ENCODE measurements at regions of chr21 and their contacts with region 1.

Region 1: GRCh38 chr21:45973659-45974072 is 7.9 kb upstream of the COL6A1 start:
- DNase-seq: peak; percentile 76 to 86 (median 86)
- H3K4me3 ChIP-seq: peak overlapping the region; percentile 29 to 75 (median 55)
- H3K27ac ChIP-seq: no peak overlapping the region
- H3K4me1 ChIP-seq: peaks cover 0 to 45% (median 35%) of the 10 kb centered on the region in 4 experiments
- H3K27me3 ChIP-seq: peaks cover 0 to 67% (median 24%) of the 10 kb centered on the region in 5 experiments

Region 2: GRCh38 chr21:45800339-45801080 is 173.2 kb before region 1 on chr21:
- CTCF ChIA-PET with region 1: no interaction called
- POLR2A ChIA-PET with region 1: no interaction called
- DNase-seq: no peak
- H3K4me3 ChIP-seq: no peak overlapping the region
- H3K27ac ChIP-seq: no peak overlapping the region
- H3K4me1 ChIP-seq: peaks cover 0 to 2% (median 0%) of the 10 kb centered on the region in 4 experiments
- H3K27me3 ChIP-seq: peaks cover 0 to 2% (median 0%) of the 10 kb centered on the region in 5 experiments

Region 3: DNA sequence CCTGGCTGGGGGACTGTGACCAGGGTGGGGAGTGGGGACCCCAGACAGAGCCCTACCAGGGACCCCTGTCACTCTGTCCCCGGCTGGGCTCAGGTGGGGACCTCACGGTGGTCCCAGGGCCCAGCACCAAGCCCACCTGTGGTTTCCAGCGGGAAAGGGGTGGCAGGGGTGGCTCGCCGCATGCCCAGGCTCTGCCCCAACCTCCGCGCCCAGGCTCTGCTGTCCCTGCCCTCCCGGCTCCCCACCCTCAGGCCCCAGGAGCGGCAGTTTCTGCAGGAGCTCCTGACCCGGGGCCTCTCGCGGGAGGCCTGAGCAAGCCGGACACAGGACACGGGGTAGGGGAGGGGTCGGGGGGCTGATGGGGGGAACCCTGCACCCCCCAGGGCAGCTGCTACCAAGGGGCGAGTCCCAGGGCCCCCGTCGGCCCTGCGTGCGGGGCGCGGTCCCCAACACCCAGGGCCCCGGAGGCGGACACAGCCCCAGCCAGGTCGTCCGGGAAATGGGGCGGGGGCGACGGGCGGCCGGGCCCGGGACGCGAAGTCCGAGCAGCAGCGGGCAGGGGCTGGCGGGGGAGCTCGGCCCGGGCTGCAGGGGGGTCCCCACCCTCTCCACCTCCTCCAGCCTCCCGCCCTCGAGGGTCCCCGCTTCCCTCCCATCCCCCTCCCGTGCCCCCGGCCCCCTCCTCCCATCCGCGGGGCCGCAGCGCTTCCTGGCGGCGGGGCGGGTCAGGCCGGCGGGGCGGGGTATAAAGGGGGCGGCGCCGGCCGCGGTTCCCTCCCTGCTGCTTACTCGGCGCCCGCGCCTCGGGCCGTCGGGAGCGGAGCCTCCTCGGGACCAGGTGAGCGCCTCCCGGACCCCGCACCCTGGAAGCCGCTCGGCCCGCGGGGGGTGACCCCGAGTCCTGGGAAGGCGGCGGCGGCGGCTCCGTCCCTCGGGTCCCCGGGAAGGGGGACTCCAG is 123.9 kb after region 1 on chr21 and contains the start of gene COL6A2:
- CTCF ChIA-PET with region 1: interaction called, 15 read pairs
- POLR2A ChIA-PET with region 1: no interaction called
- DNase-seq: peak; percentile 26 to 48 (median 45)
- H3K4me3 ChIP-seq: peak within 1 kb of the TSS in 5 of 7 experiments; percentile 15 to 60 (median 37)
- H3K27ac ChIP-seq: no peak within 1 kb of the TSS
- H3K4me1 ChIP-seq: peaks cover 0 to 7% (median 3%) of the 10 kb centered on the region in 4 experiments
- H3K27me3 ChIP-seq: peaks cover 0 to 47% (median 12%) of the 10 kb centered on the region in 5 experiments

Region 4: GRCh38 chr21:46144464-46145070 is 170.9 kb after region 1 on chr21:
- CTCF ChIA-PET with region 1: interaction called, 38 read pairs
- POLR2A ChIA-PET with region 1: no interaction called
- DNase-seq: no peak
- H3K4me3 ChIP-seq: peak overlapping the region in 1 of 7 experiments; percentile 88
- H3K27ac ChIP-seq: no peak overlapping the region
- H3K4me1 ChIP-seq: peaks cover 0 to 7% (median 2%) of the 10 kb centered on the region in 4 experiments
- H3K27me3 ChIP-seq: peaks cover 0 to 2% (median 0%) of the 10 kb centered on the region in 5 experiments

Region 5: GRCh38 chr21:46374761-46375389 is 401.2 kb after region 1 on chr21:
- CTCF ChIA-PET with region 1: no interaction called
- POLR2A ChIA-PET with region 1: no interaction called
- DNase-seq: no peak
- H3K4me3 ChIP-seq: no peak overlapping the region
- H3K27ac ChIP-seq: no peak overlapping the region
- H3K4me1 ChIP-seq: peaks cover 0 to 8% (median 7%) of the 10 kb centered on the region in 4 experiments
- H3K27me3 ChIP-seq: no peaks in the 10 kb centered on the region